Mammary epithelial cell (primary cell): ENCODE measurements at regions of chr3 and their contacts with region 1.

Region 1: GRCh38 chr3:98573181-98573728 is 20.2 kb downstream of the CPOX start:
- DNase-seq: peak; percentile 19
- H3K4me3 ChIP-seq: no peak overlapping the region
- H3K27ac ChIP-seq: no peak overlapping the region
- H3K4me1 ChIP-seq: peaks cover 15% of the 10 kb centered on the region
- H3K27me3 ChIP-seq: no peaks in the 10 kb centered on the region
- CTCF ChIP-seq: peak; percentile 44 to 59

Region 2: DNA sequence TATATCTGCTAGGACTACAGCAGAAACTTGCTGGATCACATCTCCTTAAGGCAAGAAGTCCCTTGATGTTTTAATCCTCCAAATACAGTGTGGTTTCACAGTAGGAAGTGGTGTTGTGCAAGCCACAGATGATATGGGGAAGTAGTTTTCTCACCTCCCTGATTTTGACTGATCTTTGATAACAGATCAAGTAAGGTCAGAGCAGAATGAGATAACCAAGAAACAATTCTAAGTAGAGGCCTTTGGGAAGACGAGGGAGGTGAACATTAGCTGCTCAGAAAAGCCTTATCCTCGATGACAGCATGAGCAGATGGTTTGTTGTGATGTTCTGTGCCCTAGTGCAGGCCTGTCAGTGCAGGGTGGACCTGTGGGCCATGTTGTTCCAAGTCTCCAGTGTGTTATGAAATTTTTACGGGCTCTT is 662.3 kb before region 1 on chr3:
- CTCF ChIA-PET with region 1: no interaction called
- dilution Hi-C with region 1: no loop called
- in situ Hi-C with region 1: no loop called
- intact Hi-C with region 1: no loop called
- DNase-seq: no peak
- H3K4me3 ChIP-seq: no peak overlapping the region
- H3K27ac ChIP-seq: no peak overlapping the region
- H3K4me1 ChIP-seq: peaks cover 10% of the 10 kb centered on the region
- H3K27me3 ChIP-seq: no peaks in the 10 kb centered on the region
- CTCF ChIP-seq: no peak

Region 3: GRCh38 chr3:98188545-98188944 is 384.7 kb before region 1 on chr3:
- CTCF ChIA-PET with region 1: no interaction called
- dilution Hi-C with region 1: no loop called
- in situ Hi-C with region 1: no loop called
- intact Hi-C with region 1: loop called (anchors 5 kb)
- DNase-seq: peak; percentile 0
- H3K4me3 ChIP-seq: no peak overlapping the region
- H3K27ac ChIP-seq: no peak overlapping the region
- H3K4me1 ChIP-seq: no peaks in the 10 kb centered on the region
- H3K27me3 ChIP-seq: no peaks in the 10 kb centered on the region
- CTCF ChIP-seq: peak in 1 of 2 donors; percentile 35

Region 4: GRCh38 chr3:98343647-98344507 is 229.4 kb before region 1 on chr3:
- CTCF ChIA-PET with region 1: no interaction called
- dilution Hi-C with region 1: no loop called
- in situ Hi-C with region 1: loop called in 1 of 2 experiments (anchors 25 kb)
- intact Hi-C with region 1: loop called (anchors 1 kb)
- DNase-seq: peak; percentile 55
- H3K4me3 ChIP-seq: no peak overlapping the region
- H3K27ac ChIP-seq: no peak overlapping the region
- H3K4me1 ChIP-seq: peaks cover 3% of the 10 kb centered on the region
- H3K27me3 ChIP-seq: peaks cover 4% of the 10 kb centered on the region
- CTCF ChIP-seq: peak; percentile 80 to 81

Region 5: GRCh38 chr3:98359993-98360675 is 213.1 kb before region 1 on chr3:
- CTCF ChIA-PET with region 1: no interaction called
- dilution Hi-C with region 1: no loop called
- in situ Hi-C with region 1: no loop called
- intact Hi-C with region 1: loop called (anchors 1 kb)
- DNase-seq: peak; percentile 65
- H3K4me3 ChIP-seq: no peak overlapping the region
- H3K27ac ChIP-seq: no peak overlapping the region
- H3K4me1 ChIP-seq: peaks cover 4% of the 10 kb centered on the region
- H3K27me3 ChIP-seq: no peaks in the 10 kb centered on the region
- CTCF ChIP-seq: peak; percentile 22 to 43

Region 6: DNA sequence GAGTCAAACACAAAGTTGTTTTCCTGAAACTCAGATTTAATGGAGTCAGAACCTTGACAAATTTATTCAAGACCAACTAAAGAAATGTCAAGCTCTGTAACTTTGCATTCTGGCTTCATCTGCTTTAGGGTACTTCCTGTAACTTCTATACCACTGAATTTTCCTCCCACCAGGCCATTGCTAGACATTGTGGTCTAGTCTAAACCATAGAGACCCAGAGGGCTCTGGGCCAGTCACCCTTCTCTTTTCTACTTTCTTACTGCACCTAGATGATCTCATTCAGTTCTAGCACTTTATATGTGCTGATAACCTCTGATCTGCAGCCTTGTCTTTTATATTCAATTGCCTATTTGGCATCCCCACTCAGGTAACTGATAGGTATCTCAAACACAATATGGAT is 113.0 kb before region 1 on chr3:
- CTCF ChIA-PET with region 1: no interaction called
- dilution Hi-C with region 1: no loop called
- in situ Hi-C with region 1: no loop called
- intact Hi-C with region 1: no loop called
- DNase-seq: no peak
- H3K4me3 ChIP-seq: no peak overlapping the region
- H3K27ac ChIP-seq: no peak overlapping the region
- H3K4me1 ChIP-seq: no peaks in the 10 kb centered on the region
- H3K27me3 ChIP-seq: no peaks in the 10 kb centered on the region
- CTCF ChIP-seq: no peak

Region 7: GRCh38 chr3:98545940-98546339 is 27.3 kb before region 1 on chr3:
- CTCF ChIA-PET with region 1: no interaction called
- dilution Hi-C with region 1: no loop called
- in situ Hi-C with region 1: no loop called
- intact Hi-C with region 1: no loop called
- DNase-seq: no peak
- H3K4me3 ChIP-seq: no peak overlapping the region
- H3K27ac ChIP-seq: no peak overlapping the region
- H3K4me1 ChIP-seq: no peaks in the 10 kb centered on the region
- H3K27me3 ChIP-seq: no peaks in the 10 kb centered on the region
- CTCF ChIP-seq: no peak